WTC11 (cell line): ENCODE measurements at regions of chr19 and their contacts with region 1.

Region 1: GRCh38 chr19:29263305-29264135 is 50.6 kb upstream of the UQCRFS1 start:
- DNase-seq: peak; percentile 78
- ATAC-seq: peak; percentile 64
- H3K4me3 Mint-ChIP-seq: no peak overlapping the region
- H3K27ac Mint-ChIP-seq: no peak overlapping the region
- H3K4me1 Mint-ChIP-seq: peaks cover 11% of the 10 kb centered on the region
- H3K27me3 Mint-ChIP-seq: no peaks in the 10 kb centered on the region; the same call in 1 of the 2 replicates
- CTCF ChIP-seq: peak; percentile 83

Region 2: DNA sequence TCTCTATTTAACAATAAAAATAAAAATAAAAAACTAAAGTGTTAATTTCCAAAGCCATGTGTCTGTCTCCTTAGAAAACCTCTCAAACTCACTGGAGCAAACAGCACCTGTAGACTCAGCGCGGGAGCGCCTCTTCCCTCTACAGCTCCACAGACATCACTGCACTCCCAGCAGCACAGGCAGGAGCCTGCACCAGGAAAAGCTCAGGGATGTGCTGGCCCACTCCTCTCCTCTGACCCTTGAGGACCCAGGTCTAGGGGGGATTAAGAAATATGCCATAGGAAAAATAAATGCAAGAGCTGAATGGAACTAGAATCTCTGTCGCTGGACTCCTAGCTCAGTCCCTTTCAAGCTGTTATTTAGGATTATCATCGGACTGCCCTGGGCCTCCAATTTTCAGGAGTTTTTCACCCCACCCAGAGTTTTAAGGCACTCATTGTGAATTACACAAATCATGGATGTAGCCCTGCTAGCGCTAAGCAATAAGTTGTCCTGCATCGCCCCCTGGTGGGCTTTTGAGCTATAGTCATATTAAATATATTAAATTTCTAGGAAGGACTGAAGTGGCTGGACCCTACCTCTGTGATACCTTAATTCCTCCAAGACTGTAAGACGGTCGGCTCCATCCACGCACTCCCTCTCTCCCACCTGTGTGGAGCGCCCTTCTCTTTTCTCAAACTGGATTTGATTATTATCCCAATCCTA is 384.5 kb before region 1 on chr19:
- CTCF ChIA-PET with region 1: interaction called, 10 read pairs
- POLR2A ChIA-PET with region 1: no interaction called
- DNase-seq: peak; percentile 76
- ATAC-seq: peak; percentile 62
- H3K4me3 Mint-ChIP-seq: no peak overlapping the region
- H3K27ac Mint-ChIP-seq: no peak overlapping the region
- H3K4me1 Mint-ChIP-seq: peaks cover 52% of the 10 kb centered on the region
- H3K27me3 Mint-ChIP-seq: peaks cover 19% of the 10 kb centered on the region
- CTCF ChIP-seq: peak; percentile 82

Region 3: DNA sequence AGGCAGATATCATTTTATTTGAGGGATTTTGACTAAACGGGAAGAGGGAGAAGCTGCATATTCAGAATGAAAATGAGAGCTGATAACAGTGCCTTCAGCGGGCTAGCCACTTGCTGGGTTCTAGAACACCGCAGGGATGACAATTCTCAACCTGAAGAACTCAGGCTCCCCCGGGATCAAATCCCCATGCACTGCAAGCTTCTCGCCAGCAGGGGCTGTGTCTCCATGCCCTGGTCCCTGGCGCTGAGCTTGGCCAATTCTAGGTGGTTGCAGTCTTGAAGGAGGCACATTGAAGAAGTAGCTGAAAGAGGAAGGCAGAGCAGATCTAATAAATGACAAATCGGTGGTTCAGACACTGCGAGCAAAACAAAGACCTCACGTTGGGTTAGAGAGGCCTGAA is 179.3 kb before region 1 on chr19:
- CTCF ChIA-PET with region 1: interaction called, 17 read pairs
- POLR2A ChIA-PET with region 1: no interaction called
- DNase-seq: peak; percentile 63
- ATAC-seq: peak; percentile 69
- H3K4me3 Mint-ChIP-seq: no peak overlapping the region
- H3K27ac Mint-ChIP-seq: no peak overlapping the region
- H3K4me1 Mint-ChIP-seq: peaks cover 27% of the 10 kb centered on the region
- H3K27me3 Mint-ChIP-seq: no peaks in the 10 kb centered on the region; the same call in 1 of the 2 replicates
- CTCF ChIP-seq: peak; percentile 31; the same call in 1 of the 2 replicates

Region 4: GRCh38 chr19:29162694-29163093 is 100.8 kb before region 1 on chr19:
- CTCF ChIA-PET with region 1: interaction called, 11 read pairs
- POLR2A ChIA-PET with region 1: no interaction called
- DNase-seq: no peak
- ATAC-seq: peak; percentile 56
- H3K4me3 Mint-ChIP-seq: no peak overlapping the region
- H3K27ac Mint-ChIP-seq: no peak overlapping the region
- H3K4me1 Mint-ChIP-seq: peaks cover 36% of the 10 kb centered on the region
- H3K27me3 Mint-ChIP-seq: peaks cover 54% of the 10 kb centered on the region
- CTCF ChIP-seq: no peak

Region 5: GRCh38 chr19:29201855-29202254 is 61.7 kb before region 1 on chr19:
- CTCF ChIA-PET with region 1: interaction called, 16 read pairs
- POLR2A ChIA-PET with region 1: no interaction called
- DNase-seq: no peak
- ATAC-seq: no peak
- H3K4me3 Mint-ChIP-seq: no peak overlapping the region
- H3K27ac Mint-ChIP-seq: no peak overlapping the region
- H3K4me1 Mint-ChIP-seq: peaks cover 18% of the 10 kb centered on the region
- H3K27me3 Mint-ChIP-seq: peaks cover 4% of the 10 kb centered on the region; the same call in 1 of the 2 replicates
- CTCF ChIP-seq: no peak

Region 6: GRCh38 chr19:29421196-29421545 is 157.7 kb after region 1 on chr19:
- CTCF ChIA-PET with region 1: no interaction called
- POLR2A ChIA-PET with region 1: no interaction called
- DNase-seq: no peak
- ATAC-seq: no peak
- H3K4me3 Mint-ChIP-seq: no peak overlapping the region
- H3K27ac Mint-ChIP-seq: no peak overlapping the region
- H3K4me1 Mint-ChIP-seq: no peaks in the 10 kb centered on the region
- H3K27me3 Mint-ChIP-seq: peaks cover 2% of the 10 kb centered on the region; the same call in 1 of the 2 replicates
- CTCF ChIP-seq: no peak

Region 7: GRCh38 chr19:29478578-29479565 is 215.4 kb after region 1 on chr19:
- CTCF ChIA-PET with region 1: interaction called, 14 read pairs
- POLR2A ChIA-PET with region 1: no interaction called
- DNase-seq: peak; percentile 90
- ATAC-seq: peak; percentile 100
- H3K4me3 Mint-ChIP-seq: no peak overlapping the region
- H3K27ac Mint-ChIP-seq: no peak overlapping the region
- H3K4me1 Mint-ChIP-seq: no peaks in the 10 kb centered on the region
- H3K27me3 Mint-ChIP-seq: peaks cover 12% of the 10 kb centered on the region
- CTCF ChIP-seq: peak; percentile 39; the same call in 1 of the 2 replicates

Region 8: DNA sequence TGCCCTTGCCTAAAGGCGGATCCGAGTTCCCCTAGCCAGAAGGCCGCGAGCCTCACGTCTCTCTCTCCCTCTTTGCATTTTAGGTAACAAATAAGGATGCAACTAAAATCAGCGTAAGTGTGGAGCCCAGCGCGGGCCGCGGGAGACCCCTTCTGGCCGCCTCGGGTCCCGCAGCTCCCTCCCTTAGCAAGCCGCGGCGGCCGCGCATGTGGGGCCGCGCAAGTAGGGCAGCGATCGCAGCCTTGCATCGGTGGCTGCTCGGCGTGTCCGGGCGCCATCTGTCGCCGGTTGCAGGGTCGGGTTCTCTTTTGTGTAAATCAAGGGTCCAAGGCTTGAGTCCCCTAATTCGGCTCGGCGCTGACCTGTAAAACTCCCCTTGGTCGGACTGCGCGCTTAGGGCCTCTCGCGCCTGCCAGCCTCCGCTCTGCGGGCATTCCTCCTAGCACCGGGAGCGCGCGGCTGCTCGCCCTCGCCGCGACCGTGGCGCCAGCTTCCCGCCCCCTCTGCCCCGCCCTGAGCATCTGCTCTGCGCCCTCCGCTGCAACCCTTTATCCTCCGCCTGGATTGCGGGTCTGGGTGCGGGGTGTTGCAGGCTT is 264.9 kb after region 1 on chr19:
- CTCF ChIA-PET with region 1: interaction called, 27 read pairs
- POLR2A ChIA-PET with region 1: no interaction called
- DNase-seq: peak; percentile 86
- ATAC-seq: peak; percentile 49
- H3K4me3 Mint-ChIP-seq: peak overlapping the region; percentile 69
- H3K27ac Mint-ChIP-seq: no peak overlapping the region
- H3K4me1 Mint-ChIP-seq: peaks cover 24% of the 10 kb centered on the region
- H3K27me3 Mint-ChIP-seq: peaks cover 79% of the 10 kb centered on the region
- CTCF ChIP-seq: peak; percentile 73